ENCODE measurements at regions of chr12 and their contacts with region 1.

Region 1: DNA sequence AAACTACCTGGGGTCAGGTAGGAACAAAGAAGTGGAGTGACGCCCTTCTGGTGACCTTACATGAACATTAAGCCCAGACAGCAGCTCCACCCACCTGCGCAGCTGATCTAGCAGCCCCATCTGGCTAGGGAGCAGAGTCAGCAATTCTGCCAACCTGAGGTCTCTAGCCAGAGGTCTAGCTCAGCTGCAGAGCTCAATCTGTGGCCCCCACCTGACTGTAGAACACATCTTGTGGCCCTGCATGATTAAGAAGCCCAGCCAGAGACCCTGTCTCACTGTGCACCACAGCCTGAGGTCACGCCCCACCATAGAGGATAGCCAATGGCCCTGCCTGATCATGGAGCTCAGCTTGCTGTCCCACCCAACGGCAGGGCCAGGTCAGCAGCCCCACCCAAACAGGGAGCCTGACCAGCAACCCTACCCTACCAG is 50.6 kb upstream of the HIGD1C start:
- DNase-seq: no peak
- ATAC-seq: no peak
- H3K4me3 ChIP-seq: no peak overlapping the region
- H3K27ac ChIP-seq: no peak overlapping the region
- H3K4me1 ChIP-seq: no peaks in the 10 kb centered on the region
- H3K27me3 ChIP-seq: no peaks in the 10 kb centered on the region
- CTCF ChIP-seq: no peak

Region 2: GRCh38 chr12:50637870-50638481 is 263.7 kb before region 1 on chr12:
- intact Hi-C with region 1: no loop called
- DNase-seq: no peak
- ATAC-seq: peak in 3 of 8 donors; percentile 50 to 58 (median 56)
- H3K4me3 ChIP-seq: no peak overlapping the region
- H3K27ac ChIP-seq: no peak overlapping the region
- H3K4me1 ChIP-seq: peaks cover 0 to 50% (median 39%) of the 10 kb centered on the region in 9 donors
- H3K27me3 ChIP-seq: no peaks in the 10 kb centered on the region
- CTCF ChIP-seq: peak; percentile 38 to 85 (median 72)

Region 3: GRCh38 chr12:50859621-50860310 is 41.9 kb before region 1 on chr12:
- intact Hi-C with region 1: loop called in 1 of 10 experiments (anchors 10 kb)
- DNase-seq: no peak
- ATAC-seq: no peak
- H3K4me3 ChIP-seq: no peak overlapping the region
- H3K27ac ChIP-seq: no peak overlapping the region
- H3K4me1 ChIP-seq: no peaks in the 10 kb centered on the region
- H3K27me3 ChIP-seq: no peaks in the 10 kb centered on the region
- CTCF ChIP-seq: no peak

Region 4: GRCh38 chr12:51118706-51119105 is 217.0 kb after region 1 on chr12:
- intact Hi-C with region 1: no loop called
- DNase-seq: no peak
- ATAC-seq: no peak
- H3K4me3 ChIP-seq: no peak overlapping the region
- H3K27ac ChIP-seq: no peak overlapping the region
- H3K4me1 ChIP-seq: peaks cover 0 to 11% (median 4%) of the 10 kb centered on the region in 9 donors
- H3K27me3 ChIP-seq: no peaks in the 10 kb centered on the region
- CTCF ChIP-seq: no peak

Region 5: DNA sequence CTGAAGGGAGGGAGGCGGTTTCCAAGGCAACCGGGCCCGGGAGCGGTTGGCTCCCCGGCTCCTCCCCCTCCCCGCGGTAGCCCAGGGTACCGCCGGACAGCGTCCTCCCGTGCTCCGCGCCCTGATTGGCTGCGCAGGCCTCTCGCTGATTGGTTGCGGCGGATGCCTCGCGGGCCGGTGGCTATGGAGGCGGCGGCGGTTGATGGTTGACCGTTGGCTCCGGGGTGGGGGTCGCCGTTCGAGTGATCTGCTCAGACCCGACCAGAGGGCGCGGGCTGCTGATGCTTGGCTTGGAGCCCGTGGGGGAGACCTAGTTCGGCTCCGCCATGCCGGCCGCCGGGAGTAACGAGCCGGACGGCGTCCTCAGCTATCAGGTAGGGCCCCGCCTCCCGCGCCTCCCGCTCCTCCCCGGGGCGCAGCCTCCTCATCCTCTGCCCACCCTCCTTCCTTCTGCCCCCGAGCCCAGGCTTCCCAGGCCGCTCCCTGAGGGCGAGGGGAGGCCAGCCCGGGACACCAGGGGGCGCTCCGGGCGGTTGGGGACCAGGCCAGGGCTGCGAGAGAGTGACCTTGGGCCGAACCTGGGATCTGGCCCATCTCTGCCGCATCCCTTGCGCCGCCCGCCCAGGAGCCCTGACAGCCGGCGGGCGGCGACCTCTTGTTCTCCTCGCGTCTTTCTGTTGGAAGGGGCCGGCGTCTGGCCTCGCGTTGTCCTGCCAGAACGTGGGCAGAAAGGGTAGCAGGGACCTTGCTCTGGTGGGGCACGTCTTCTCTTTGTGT is 523.2 kb after region 1 on chr12 and contains the start of gene SLC4A8:
- intact Hi-C with region 1: no loop called
- DNase-seq: peak; percentile 84 to 85
- ATAC-seq: peak; percentile 93 to 96 (median 94)
- H3K4me3 ChIP-seq: peak within 1 kb of the TSS; percentile 34 to 66 (median 57)
- H3K27ac ChIP-seq: peak within 1 kb of the TSS in 2 of 10 donors; percentile 2 to 27
- H3K4me1 ChIP-seq: peaks cover 0 to 13% (median 10%) of the 10 kb centered on the region in 9 donors
- H3K27me3 ChIP-seq: peaks cover 0 to 36% (median 5%) of the 10 kb centered on the region in 7 donors
- CTCF ChIP-seq: peak; percentile 31 to 83 (median 79)
- total RNA-seq, gene SLC4A8: 0.28 to 1.8 (median 0.63) TPM

Measured in heart right ventricle (tissue), 16 donors.